Natural killer cell (primary cell): ENCODE measurements at regions of chr1 and their contacts with region 1.

Region 1: DNA sequence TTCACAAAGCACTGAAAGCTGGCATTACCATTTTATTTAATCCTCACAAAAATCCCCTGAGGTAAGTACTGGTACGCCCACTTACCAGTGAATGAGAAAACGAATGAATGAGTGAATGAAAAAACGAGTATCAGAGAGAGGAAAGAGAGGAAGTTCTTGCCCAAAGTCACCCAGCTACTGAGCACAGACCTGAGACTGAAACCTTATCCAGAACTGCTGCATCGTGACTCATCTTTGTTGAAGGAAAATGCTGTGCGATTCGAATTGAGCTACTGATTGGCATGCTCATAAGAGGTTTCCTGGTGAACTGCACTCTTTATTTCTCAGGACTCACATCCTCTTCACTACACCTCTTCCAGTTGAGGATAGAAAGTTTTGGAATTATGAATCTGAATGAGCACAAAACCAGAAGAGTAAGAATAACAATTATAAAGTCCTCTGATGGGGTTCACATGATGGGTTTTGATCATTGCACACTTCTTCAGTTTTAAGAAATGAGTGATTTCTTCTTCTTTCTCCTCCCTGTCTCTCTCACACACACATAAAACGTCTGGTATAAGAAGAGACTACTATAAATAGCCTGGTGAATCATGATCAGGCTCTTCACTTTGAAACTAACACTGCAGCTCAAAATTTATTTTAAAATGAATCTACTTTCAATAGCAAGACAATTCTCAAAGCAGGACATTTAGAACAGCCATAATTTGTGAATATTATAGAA is 32.1 kb downstream of the IL12RB2 start:
- DNase-seq: peak in 1 of 2 donors; percentile 31
- ATAC-seq: no peak
- H3K4me3 ChIP-seq: no peak overlapping the region
- H3K4me3 Mint-ChIP-seq: peak overlapping the region; percentile 65
- H3K27ac ChIP-seq: no peak overlapping the region
- H3K27ac Mint-ChIP-seq: peak overlapping the region; percentile 85 to 86
- H3K4me1 ChIP-seq: peaks cover 52% of the 10 kb centered on the region
- H3K4me1 Mint-ChIP-seq: peaks cover 80 to 84% of the 10 kb centered on the region in 2 donors
- H3K27me3 ChIP-seq: no peaks in the 10 kb centered on the region
- H3K27me3 Mint-ChIP-seq: no peaks in the 10 kb centered on the region
- CTCF ChIP-seq: no peak

Region 2: GRCh38 chr1:66924756-66925557 is 414.8 kb before region 1 on chr1 and contains the starts of genes DNAI4 and MIER1:
- intact Hi-C with region 1: loop called (anchors 10 kb)
- DNase-seq: peak; percentile 95 to 98
- ATAC-seq: peak; percentile 94 to 99 (median 94)
- H3K4me3 ChIP-seq: peak within 1 kb of the TSS; percentile 71
- H3K4me3 Mint-ChIP-seq: peak within 1 kb of the TSS; percentile 91
- H3K27ac ChIP-seq: peak within 1 kb of the TSS; percentile 98
- H3K27ac Mint-ChIP-seq: peak within 1 kb of the TSS; percentile 96
- H3K4me1 ChIP-seq: peaks cover 23% of the 10 kb centered on the region
- H3K4me1 Mint-ChIP-seq: peaks cover 27 to 32% of the 10 kb centered on the region in 2 donors
- H3K27me3 ChIP-seq: no peaks in the 10 kb centered on the region
- H3K27me3 Mint-ChIP-seq: no peaks in the 10 kb centered on the region
- CTCF ChIP-seq: no peak
- total RNA-seq, gene DNAI4: 1.4 to 4.3 (median 2.2) TPM
- total RNA-seq, gene MIER1: 87.9 to 94.3 (median 93.2) TPM

Region 3: GRCh38 chr1:67174716-67175284 is 165.0 kb before region 1 on chr1:
- intact Hi-C with region 1: loop called (anchors 5 kb)
- DNase-seq: no peak
- ATAC-seq: no peak
- H3K4me3 ChIP-seq: no peak overlapping the region
- H3K4me3 Mint-ChIP-seq: no peak overlapping the region
- H3K27ac ChIP-seq: no peak overlapping the region
- H3K27ac Mint-ChIP-seq: no peak overlapping the region
- H3K4me1 ChIP-seq: peaks cover 11% of the 10 kb centered on the region
- H3K4me1 Mint-ChIP-seq: peaks cover 30 to 31% of the 10 kb centered on the region in 2 donors
- H3K27me3 ChIP-seq: no peaks in the 10 kb centered on the region
- H3K27me3 Mint-ChIP-seq: peaks cover 0 to 3% of the 10 kb centered on the region in 2 donors
- CTCF ChIP-seq: no peak

Region 4: GRCh38 chr1:67645495-67646144 is 305.8 kb after region 1 on chr1:
- intact Hi-C with region 1: no loop called
- DNase-seq: no peak
- ATAC-seq: no peak
- H3K4me3 ChIP-seq: no peak overlapping the region
- H3K4me3 Mint-ChIP-seq: no peak overlapping the region
- H3K27ac ChIP-seq: no peak overlapping the region
- H3K27ac Mint-ChIP-seq: no peak overlapping the region
- H3K4me1 ChIP-seq: no peaks in the 10 kb centered on the region
- H3K4me1 Mint-ChIP-seq: no peaks in the 10 kb centered on the region
- H3K27me3 ChIP-seq: no peaks in the 10 kb centered on the region
- H3K27me3 Mint-ChIP-seq: no peaks in the 10 kb centered on the region
- CTCF ChIP-seq: no peak

Region 5: DNA sequence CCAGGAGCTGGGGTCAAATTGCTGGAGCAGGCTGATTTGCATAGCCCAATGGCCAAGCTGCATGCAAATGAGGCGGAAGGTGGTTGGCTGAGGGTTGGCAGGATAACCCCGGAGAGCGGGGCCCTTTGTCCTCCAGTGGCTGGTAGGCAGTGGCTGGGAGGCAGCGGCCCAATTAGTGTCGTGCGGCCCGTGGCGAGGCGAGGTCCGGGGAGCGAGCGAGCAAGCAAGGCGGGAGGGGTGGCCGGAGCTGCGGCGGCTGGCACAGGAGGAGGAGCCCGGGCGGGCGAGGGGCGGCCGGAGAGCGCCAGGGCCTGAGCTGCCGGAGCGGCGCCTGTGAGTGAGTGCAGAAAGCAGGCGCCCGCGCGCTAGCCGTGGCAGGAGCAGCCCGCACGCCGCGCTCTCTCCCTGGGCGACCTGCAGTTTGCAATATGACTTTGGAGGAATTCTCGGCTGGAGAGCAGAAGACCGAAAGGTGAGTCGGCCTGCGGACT is 345.3 kb after region 1 on chr1 and contains the start of gene GADD45A:
- intact Hi-C with region 1: loop called (anchors 10 kb)
- DNase-seq: peak; percentile 95 to 98
- ATAC-seq: peak; percentile 85 to 96 (median 90)
- H3K4me3 ChIP-seq: peak within 1 kb of the TSS; percentile 94
- H3K4me3 Mint-ChIP-seq: peak within 1 kb of the TSS; percentile 96
- H3K27ac ChIP-seq: peak within 1 kb of the TSS; percentile 63
- H3K27ac Mint-ChIP-seq: peak within 1 kb of the TSS; percentile 81 to 94
- H3K4me1 ChIP-seq: peaks cover 14% of the 10 kb centered on the region
- H3K4me1 Mint-ChIP-seq: peaks cover 24 to 32% of the 10 kb centered on the region in 2 donors
- H3K27me3 ChIP-seq: no peaks in the 10 kb centered on the region
- H3K27me3 Mint-ChIP-seq: no peaks in the 10 kb centered on the region
- CTCF ChIP-seq: no peak
- total RNA-seq, gene GADD45A: 21.8 to 30.3 (median 26.6) TPM